Mucosa of descending colon (tissue), 3 donors: ENCODE measurements at regions of chr17 and their contacts with region 1.

Region 1: DNA sequence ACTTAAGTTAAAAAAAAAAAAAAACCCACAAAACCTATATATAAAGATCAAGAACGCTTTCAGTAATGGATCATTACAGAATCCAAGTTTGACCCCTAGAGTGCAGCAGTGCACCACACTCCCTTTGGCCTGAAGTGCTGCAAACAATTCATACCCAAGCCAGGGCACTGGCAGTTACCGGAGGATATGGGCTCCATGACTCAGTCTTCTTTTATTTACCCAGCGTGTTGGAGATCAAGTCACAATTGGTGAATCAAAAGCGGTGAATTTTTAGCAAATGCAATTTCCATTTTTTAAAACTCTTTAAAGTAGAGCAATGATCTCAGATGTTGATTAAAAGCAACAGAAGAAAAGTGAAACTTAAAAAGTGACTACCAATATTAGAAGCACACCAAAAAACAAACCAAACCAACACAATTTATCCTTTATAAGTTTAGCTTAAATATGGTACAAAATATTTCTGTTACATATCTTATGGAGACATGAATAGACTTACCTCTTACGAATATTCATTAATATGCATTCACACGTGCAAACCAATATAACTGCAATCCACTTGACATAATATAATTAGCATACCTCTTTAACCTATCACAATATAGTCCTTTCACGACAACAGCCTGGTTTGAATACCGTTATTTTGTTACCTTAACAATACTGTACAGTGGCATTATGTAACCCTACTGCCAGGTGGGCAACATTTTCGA is 46.3 kb downstream of the ZNF652 start:
- DNase-seq: peak in 2 of 3 donors; percentile 69 to 87
- ATAC-seq: peak; percentile 100
- H3K4me3 ChIP-seq: no peak overlapping the region
- H3K4me1 ChIP-seq: peaks cover 6% of the 10 kb centered on the region
- CTCF ChIP-seq: peak; percentile 53

Region 2: GRCh38 chr17:49393491-49394255 is 78.0 kb after region 1 on chr17:
- intact Hi-C with region 1: loop called (anchors 2 to 5 kb)
- DNase-seq: no peak
- ATAC-seq: no peak
- H3K4me3 ChIP-seq: no peak overlapping the region
- H3K4me1 ChIP-seq: peaks cover 7% of the 10 kb centered on the region
- CTCF ChIP-seq: no peak

Region 3: DNA sequence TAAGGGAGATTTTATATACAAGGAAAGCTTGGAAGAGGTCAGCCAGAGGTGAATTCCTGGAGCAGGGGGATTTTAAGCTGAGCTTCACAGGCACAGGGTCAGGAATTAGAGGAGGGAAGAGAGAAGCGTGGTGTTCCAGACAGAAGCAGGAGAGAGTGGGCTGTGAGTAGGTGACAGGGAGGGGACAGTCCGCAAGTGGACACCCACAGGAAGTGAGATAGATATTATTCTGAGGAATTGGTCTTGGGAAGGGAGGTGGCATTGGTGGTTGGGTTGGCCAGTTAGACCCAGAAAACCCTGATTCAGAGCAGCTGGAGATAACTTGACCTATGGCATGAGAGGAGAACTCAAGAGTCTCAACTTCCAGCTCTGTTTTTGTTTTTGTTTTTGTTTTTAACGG is 84.3 kb after region 1 on chr17:
- intact Hi-C with region 1: loop called (anchors 2 to 5 kb)
- DNase-seq: no peak
- ATAC-seq: no peak
- H3K4me3 ChIP-seq: no peak overlapping the region
- H3K4me1 ChIP-seq: no peaks in the 10 kb centered on the region
- CTCF ChIP-seq: no peak